ENCODE measurements at regions of chr16 and their contacts with region 1.

Region 1: GRCh38 chr16:23678430-23679273 is at the start of gene PLK1:
- DNase-seq: peak; percentile 71 to 90
- H3K4me3 ChIP-seq: peak within 1 kb of the TSS; percentile 94
- H3K27ac ChIP-seq: no peak within 1 kb of the TSS; the same call in 1 of the 2 replicates
- H3K4me1 ChIP-seq: peaks cover 27% of the 10 kb centered on the region
- H3K27me3 ChIP-seq: no peaks in the 10 kb centered on the region
- CTCF ChIP-seq: peak; percentile 60
- total RNA-seq, gene PLK1: 169 and 213 TPM in 2 replicates

Region 2: GRCh38 chr16:23712976-23713375 is 34.3 kb after region 1 on chr16 and contains the start of gene ERN2:
- CTCF ChIA-PET with region 1: interaction called, 10 read pairs
- POLR2A ChIA-PET with region 1: no interaction called
- intact Hi-C with region 1: no loop called
- DNase-seq: no peak
- H3K4me3 ChIP-seq: no peak within 1 kb of the TSS
- H3K27ac ChIP-seq: no peak within 1 kb of the TSS
- H3K4me1 ChIP-seq: peaks cover 19% of the 10 kb centered on the region
- H3K27me3 ChIP-seq: peaks cover 15% of the 10 kb centered on the region
- CTCF ChIP-seq: no peak
- total RNA-seq, gene ERN2: 3.4 and 3.9 TPM in 2 replicates

Region 3: DNA sequence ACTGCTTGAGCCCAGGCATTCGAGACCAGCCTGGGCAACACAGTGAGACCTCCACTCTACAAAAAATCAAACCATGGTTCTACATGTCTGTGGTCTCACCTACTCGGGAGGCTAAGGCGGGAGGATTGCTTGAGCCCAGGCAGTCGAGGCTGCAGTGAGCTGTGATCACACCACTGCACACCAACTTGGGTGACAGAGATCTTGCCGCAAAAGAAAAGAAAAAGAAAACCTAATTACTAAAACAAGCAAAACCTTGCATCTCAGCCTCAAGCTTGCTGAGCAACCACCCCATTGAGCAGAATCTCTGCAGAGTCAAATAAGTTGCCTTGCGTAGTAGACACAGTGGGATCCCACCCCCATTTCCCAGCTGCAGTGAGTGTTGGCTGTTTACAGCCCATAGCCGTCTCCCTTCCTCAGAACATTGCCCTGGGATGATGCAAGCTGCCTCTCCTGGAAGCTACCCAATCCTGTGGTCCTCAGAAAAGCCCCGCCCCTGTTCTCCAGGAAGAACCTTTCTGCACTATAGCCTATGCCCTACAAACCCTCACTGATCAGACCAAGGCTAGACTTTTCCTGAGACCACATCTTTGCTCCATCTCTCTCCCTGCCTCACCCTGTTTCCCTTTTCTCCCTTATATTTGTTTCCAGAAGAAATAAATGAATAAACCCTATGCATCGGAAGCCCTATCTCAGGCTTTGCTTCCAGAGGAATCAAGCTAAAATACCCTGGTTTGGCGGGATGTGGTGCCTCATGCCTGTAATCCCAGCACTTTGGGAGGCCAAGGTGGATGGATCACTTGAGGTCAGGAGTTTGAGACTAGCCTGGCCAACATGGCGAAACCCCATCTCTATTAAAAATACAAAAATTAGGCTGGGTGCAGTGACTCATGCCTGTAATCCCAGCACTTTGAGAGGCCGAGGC is 51.1 kb after region 1 on chr16:
- CTCF ChIA-PET with region 1: interaction called, 8 read pairs
- POLR2A ChIA-PET with region 1: no interaction called
- intact Hi-C with region 1: loop called (anchors 2 kb)
- DNase-seq: peak; percentile 37 to 55
- H3K4me3 ChIP-seq: no peak overlapping the region
- H3K27ac ChIP-seq: no peak overlapping the region
- H3K4me1 ChIP-seq: peaks cover 8% of the 10 kb centered on the region; the same call in 1 of the 2 replicates
- H3K27me3 ChIP-seq: no peaks in the 10 kb centered on the region
- CTCF ChIP-seq: no peak

Measured in PC-9 (cell line).